Left cardiac atrium (tissue), 4 donors: ENCODE measurements at regions of chr4 and their contacts with region 1.

Region 1: GRCh38 chr4:99205153-99205979 is 13.7 kb downstream of the ADH6 start:
- DNase-seq: no peak
- ATAC-seq: peak; percentile 46 to 77

Region 2: GRCh38 chr4:99120501-99120900 is 84.9 kb before region 1 on chr4:
- intact Hi-C with region 1: no loop called
- DNase-seq: no peak
- ATAC-seq: no peak

Region 3: GRCh38 chr4:99356992-99357391 is 151.6 kb after region 1 on chr4:
- intact Hi-C with region 1: no loop called
- DNase-seq: no peak
- ATAC-seq: no peak

Region 4: GRCh38 chr4:99395595-99396364 is 190.4 kb after region 1 on chr4:
- intact Hi-C with region 1: loop called in 1 of 2 experiments (anchors 10 kb)
- DNase-seq: no peak
- ATAC-seq: peak in 1 of 2 donors; percentile 21